ENCODE measurements at regions of chr17 and their contacts with region 1.

Region 1: DNA sequence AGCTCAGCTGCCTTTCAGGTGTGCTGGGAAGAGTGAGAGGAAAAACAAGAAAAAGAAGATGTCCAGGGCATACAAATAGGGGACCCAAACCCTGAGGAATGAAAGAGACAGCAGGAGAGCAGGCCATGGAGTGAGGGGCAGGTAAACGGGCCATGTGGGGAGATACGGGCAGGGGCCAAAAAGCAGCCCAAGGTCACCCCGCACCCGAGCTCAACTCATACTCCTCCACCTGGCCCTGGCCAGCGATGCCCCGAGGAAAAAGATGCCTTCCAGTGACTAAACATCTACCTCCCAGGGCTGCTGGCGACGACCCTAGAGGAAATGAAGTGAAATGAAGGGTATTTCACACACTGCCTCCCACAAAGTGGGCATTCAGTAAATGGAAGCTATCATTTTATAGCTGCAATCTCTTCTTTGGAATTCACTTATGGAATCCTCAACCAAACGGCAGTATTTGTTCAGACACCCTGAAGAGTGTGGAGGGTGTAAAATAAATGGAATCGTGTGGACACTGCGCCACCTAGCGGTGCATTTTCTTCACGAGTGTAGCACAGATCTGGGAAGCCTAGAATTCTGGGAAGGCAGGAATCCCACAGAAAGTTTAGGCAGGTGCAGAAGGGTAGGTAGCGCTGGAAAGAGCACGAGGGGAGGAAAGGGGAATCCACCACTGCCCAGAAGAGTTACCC is 14.9 kb downstream of the ELAC2 start:
- DNase-seq: peak in 1 of 2 experiments; percentile 50
- H3K4me3 ChIP-seq: no peak overlapping the region
- H3K27ac ChIP-seq: no peak overlapping the region
- H3K4me1 ChIP-seq: no peaks in the 10 kb centered on the region
- H3K27me3 ChIP-seq: no peaks in the 10 kb centered on the region
- CTCF ChIP-seq: peak; percentile 81

Region 2: GRCh38 chr17:12180644-12181261 is 822.2 kb before region 1 on chr17:
- CTCF ChIA-PET with region 1: no interaction called
- POLR2A ChIA-PET with region 1: no interaction called
- intact Hi-C with region 1: loop called (anchors 2 kb)
- DNase-seq: peak; percentile 25 to 34
- H3K4me3 ChIP-seq: no peak overlapping the region
- H3K27ac ChIP-seq: no peak overlapping the region
- H3K4me1 ChIP-seq: no peaks in the 10 kb centered on the region
- H3K27me3 ChIP-seq: no peaks in the 10 kb centered on the region
- CTCF ChIP-seq: peak; percentile 77

Region 3: GRCh38 chr17:12256380-12256995 is 746.4 kb before region 1 on chr17:
- CTCF ChIA-PET with region 1: no interaction called
- POLR2A ChIA-PET with region 1: no interaction called
- intact Hi-C with region 1: loop called (anchors 1 kb)
- DNase-seq: peak in 1 of 2 experiments; percentile 16
- H3K4me3 ChIP-seq: no peak overlapping the region
- H3K27ac ChIP-seq: no peak overlapping the region
- H3K4me1 ChIP-seq: no peaks in the 10 kb centered on the region
- H3K27me3 ChIP-seq: peaks cover 25% of the 10 kb centered on the region
- CTCF ChIP-seq: peak; percentile 72

Region 4: GRCh38 chr17:13403982-13404946 is 401.4 kb after region 1 on chr17:
- CTCF ChIA-PET with region 1: no interaction called
- POLR2A ChIA-PET with region 1: no interaction called
- intact Hi-C with region 1: no loop called
- DNase-seq: no peak
- H3K4me3 ChIP-seq: no peak overlapping the region
- H3K27ac ChIP-seq: no peak overlapping the region
- H3K4me1 ChIP-seq: no peaks in the 10 kb centered on the region
- H3K27me3 ChIP-seq: no peaks in the 10 kb centered on the region
- CTCF ChIP-seq: no peak